ENCODE measurements at regions of chr1 and their contacts with region 1.

Region 1: GRCh38 chr1:47424336-47424982 is 8.4 kb downstream of the FOXE3 start:
- H3K4me3 ChIP-seq: no peak overlapping the region
- H3K27ac ChIP-seq: no peak overlapping the region
- H3K4me1 ChIP-seq: no peaks in the 10 kb centered on the region
- CTCF ChIP-seq: peak; percentile 95

Region 2: GRCh38 chr1:47399138-47399845 is 25.2 kb before region 1 on chr1:
- CTCF ChIA-PET with region 1: interaction called, 10 read pairs
- POLR2A ChIA-PET with region 1: no interaction called
- H3K4me3 ChIP-seq: no peak overlapping the region
- H3K27ac ChIP-seq: no peak overlapping the region
- H3K4me1 ChIP-seq: no peaks in the 10 kb centered on the region
- CTCF ChIP-seq: no peak

Measured in HEK293 (cell line).